ENCODE measurements at regions of chr20 and their contacts with region 1.

Region 1: DNA sequence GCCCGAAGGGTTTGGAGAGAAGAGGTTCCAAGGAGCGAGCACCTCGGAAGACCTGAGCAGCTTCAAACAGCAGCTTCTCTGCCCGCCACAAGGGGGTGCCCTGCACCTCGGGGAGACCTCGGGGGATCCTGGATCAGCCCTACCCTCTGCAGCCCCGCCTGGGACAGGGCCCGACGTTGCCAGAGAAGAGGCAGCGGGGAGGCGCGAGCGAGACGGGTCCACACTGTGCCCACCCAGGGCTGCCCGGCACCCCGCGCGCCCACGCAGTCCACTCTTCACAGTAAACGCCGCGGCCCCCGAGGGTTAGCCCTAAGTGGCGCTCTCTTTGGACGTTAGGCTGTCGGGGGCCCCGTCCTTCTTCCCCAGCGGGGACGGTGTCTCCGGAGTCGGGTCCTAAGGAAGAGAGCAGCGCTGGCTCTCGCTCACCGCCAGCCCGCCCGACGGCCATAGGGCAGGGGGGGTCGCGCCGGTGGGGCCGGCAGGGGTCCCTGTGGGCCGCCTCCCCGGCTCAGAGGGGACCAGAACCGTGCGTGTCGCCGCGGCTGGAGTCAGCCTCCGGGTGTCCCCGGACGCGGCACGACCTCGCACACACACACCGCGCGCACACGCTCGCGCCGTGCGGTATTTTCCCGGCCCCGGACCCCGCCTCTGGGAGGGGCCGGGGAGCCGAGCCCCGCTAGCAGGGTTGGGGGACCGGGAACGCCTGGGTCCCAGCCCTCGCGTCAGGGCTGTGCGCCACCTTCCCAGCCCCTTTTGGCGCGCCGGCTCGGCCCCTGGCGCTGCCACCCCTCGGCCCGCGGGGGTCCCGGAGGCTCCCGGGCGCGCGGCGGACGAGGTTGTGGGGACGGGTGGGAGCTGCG is 929 bp downstream of the CDH22 start:
- DNase-seq: peak; percentile 87
- H3K27ac ChIP-seq: no peak overlapping the region
- CTCF ChIP-seq: peak; percentile 95

Region 2: DNA sequence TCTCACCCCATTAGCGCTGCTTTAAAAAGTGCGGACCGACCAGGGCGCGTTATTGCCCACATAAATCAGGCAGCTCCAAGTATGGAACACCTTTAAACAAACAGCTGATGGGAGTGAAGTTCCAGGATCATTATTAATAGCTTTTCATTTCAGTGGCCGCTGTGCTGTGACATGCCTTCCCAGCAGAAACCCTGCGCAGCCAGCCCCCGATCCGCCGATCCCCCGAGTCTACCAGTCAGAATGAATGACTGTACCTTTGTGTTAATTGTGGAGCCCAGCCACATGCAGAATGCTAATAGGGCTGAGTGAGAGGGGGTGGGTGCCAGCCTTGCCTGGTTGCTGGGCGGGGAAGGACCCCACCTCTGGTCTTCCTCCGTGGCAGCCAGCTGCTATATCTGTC is 21.0 kb before region 1 on chr20:
- CTCF ChIA-PET with region 1: interaction called, 11 read pairs
- POLR2A ChIA-PET with region 1: interaction called, 3 read pairs
- DNase-seq: no peak
- H3K27ac ChIP-seq: no peak overlapping the region
- CTCF ChIP-seq: no peak

Region 3: DNA sequence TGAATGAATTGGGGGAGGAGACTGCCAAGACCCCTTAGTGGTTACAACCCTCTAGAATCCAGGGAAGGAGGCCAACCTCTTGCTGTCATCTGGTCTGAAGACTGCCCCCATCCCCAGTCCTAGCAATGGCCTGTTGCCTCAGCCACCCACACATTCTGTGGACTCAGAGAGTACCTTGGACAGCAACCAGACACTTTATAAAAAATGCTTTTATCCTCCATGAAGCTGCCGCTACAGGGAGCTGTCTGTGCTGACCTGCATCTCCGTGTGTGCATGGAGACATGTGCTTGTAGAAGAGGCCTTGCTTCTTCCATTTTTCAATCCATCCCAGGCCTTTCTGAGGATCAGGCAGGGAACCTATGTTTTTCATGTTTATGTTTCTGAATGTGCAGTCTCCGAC is 14.3 kb before region 1 on chr20:
- CTCF ChIA-PET with region 1: interaction called, 23 read pairs
- POLR2A ChIA-PET with region 1: interaction called, 3 read pairs
- DNase-seq: peak; percentile 59
- H3K27ac ChIP-seq: no peak overlapping the region
- CTCF ChIP-seq: no peak

Region 4: GRCh38 chr20:46324960-46325703 is 17.8 kb after region 1 on chr20:
- CTCF ChIA-PET with region 1: interaction called, 13 read pairs
- POLR2A ChIA-PET with region 1: no interaction called
- DNase-seq: peak; percentile 48
- H3K27ac ChIP-seq: no peak overlapping the region
- CTCF ChIP-seq: no peak; the same call in 1 of the 2 replicates

Region 5: DNA sequence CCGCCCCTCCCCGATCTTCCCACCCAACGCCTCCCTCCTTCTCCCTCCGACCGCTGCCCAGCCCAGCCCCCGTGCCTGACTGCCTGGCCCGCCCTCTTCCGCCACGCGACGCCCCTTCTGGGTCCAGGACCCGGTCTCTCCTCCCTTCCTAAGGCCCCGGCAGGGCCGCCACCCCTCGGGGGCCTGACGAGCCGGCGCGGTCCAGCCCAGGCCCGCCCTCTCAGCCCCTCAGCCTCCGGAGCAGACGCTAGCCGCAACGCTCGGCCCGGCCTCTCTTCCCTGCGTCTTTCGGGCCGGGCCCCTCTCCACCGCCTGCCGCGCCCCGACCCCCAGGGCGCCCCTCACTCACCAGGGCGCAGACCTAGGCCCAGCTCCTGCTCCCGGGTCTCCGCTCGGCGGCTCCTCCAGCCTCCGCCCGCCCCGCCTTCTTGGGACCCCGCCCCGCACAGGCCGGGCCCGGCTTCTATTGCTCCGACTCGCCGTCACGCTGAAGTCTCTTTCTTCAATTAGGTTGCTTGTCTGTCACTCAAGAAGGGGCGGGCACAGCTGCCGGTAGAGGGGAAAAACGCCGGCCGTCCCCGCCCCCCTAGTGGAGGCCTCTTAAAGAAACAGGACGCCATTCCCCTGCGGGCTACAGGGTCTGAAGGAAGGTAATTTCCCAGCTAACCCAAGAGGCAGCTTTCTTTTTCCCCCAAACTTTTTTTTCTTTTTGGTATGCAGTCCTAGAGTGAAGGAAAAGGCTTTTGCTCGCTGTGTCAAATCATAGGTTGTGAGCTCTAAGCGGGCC is 99.0 kb after region 1 on chr20 and contains the start of gene ELMO2:
- CTCF ChIA-PET with region 1: interaction called, 15 read pairs
- POLR2A ChIA-PET with region 1: no interaction called
- DNase-seq: peak; percentile 100
- H3K27ac ChIP-seq: peak within 1 kb of the TSS; percentile 79
- CTCF ChIP-seq: no peak

Region 6: DNA sequence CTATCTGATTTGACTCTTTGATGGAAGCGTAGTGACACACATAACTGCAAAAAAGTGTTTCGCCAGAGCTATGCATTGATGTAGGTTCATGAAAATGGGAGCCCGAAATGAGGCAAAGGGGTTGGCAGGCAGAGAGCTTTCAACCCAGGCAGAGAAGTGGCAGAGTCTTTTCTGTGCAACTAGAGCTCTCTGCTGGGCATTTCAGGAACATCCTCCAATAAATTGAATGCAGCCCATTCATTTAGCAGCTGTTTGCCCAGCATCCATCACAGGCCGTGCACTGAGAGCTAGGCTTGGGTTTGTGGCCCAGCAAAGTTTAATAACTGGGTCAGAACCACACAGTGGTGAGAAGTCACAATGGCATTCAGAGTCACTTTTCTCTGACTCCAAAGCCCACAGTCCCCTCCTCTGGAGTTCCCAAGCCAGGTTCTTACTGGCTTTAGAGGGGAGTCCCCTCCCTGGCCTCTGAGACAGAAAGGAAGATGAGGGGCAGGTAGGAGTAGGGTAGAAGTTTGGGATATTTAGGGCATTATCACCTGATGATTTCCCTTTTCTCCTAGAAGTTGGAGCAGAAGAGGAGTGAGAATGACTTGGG is 130.9 kb after region 1 on chr20:
- CTCF ChIA-PET with region 1: interaction called, 13 read pairs
- POLR2A ChIA-PET with region 1: no interaction called
- DNase-seq: peak; percentile 67
- H3K27ac ChIP-seq: no peak overlapping the region
- CTCF ChIP-seq: no peak; the same call in 1 of the 2 replicates

Measured in RWPE1 (cell line).